AG04449 (cell line): ENCODE measurements at regions of chr2 and their contacts with region 1.

Region 1: GRCh38 chr2:222690564-222691200 is 19.2 kb downstream of the MOGAT1 start:
- DNase-seq: no peak
- H3K4me3 ChIP-seq: no peak overlapping the region
- CTCF ChIP-seq: peak; percentile 99

Region 2: DNA sequence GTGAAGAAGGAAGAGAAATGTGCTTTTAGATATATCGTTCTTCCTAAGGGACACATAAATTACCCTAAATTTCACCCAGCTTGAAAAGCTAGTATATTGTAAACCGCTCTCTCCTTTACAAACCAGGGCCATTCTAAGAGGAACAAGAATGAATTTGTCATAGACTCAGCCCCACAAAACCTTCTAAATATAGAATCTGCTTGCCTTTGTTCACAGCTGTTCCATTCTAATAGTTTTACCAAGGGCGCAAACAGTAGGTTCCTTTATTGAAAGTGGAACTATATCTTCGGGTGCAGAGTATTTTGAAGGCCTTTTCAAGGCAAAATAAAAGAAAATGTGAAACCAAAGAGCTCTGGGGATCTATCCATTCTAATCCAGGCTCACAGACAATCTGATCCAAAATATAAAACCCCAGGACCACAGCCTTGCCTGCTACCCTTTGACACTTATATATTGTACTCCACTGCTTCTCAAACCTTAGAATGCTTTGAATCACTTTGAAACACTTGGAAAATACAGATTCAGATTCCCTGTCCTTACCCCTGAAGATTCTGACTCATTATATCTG is 708.7 kb before region 1 on chr2:
- CTCF ChIA-PET with region 1: no interaction called
- POLR2A ChIA-PET with region 1: no interaction called
- DNase-seq: no peak
- H3K4me3 ChIP-seq: no peak overlapping the region
- CTCF ChIP-seq: no peak

Region 3: DNA sequence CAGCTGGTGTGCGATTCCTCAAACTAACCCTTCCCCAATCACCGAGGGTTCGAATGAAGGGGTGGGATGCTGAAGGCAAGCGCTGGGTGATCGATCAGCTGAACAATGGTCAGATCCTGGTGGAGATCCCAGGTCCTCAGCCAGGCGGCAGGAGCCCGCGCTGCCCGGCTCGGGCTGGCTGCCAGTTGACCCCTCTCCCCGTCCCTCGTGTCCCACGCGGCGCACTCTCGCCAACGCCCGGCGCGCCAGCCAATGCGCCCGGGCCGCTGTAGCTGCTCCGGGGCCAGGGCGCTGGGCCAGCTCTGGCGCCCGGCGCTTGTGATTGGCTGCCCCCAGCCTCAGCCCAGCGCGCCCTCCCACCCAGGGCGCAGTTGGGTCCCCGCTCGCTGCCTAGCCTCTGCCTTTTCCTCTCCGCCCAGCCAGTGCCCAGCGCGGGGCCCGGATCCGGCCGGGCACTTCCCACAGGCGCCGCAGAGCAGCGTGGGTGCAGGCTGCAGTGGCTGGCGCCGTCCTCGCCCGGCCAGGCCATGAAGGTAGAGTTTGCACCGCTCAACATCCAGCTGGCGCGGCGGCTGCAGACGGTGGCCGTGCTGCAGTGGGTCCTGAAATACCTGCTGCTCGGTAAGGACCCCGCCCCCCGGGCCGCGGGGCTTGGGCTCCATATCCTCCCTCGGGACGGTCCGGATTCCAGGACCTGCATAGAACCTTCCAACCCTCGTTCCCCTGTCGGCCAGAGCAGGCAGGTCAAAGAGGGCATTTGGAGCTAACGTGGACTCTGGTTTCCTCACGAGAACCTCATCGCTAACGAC is 19.2 kb before region 1 on chr2 and contains the start of gene MOGAT1:
- CTCF ChIA-PET with region 1: interaction called, 76 read pairs
- POLR2A ChIA-PET with region 1: no interaction called
- DNase-seq: no peak
- H3K4me3 ChIP-seq: peak within 1 kb of the TSS; percentile 48
- CTCF ChIP-seq: no peak

Region 4: DNA sequence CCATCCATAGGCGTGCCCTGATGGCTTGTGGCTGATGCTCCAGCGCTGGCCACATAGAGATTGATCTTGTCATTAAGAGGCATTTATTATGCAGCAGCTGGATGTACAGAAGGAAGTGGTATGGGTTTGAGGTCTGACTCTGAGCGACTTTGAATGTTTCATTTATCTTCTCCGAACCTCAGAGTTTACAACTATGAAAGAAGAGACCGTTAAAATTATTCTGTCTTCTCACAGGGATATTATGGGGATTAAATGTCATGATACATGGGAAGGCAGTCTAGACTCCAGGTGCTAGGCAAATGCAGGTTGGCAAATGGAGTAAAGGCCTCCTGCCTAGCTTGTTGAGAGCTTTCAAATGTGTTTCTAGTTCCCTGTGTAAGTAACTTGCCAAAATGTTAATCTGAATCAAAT is 11.0 kb after region 1 on chr2:
- CTCF ChIA-PET with region 1: interaction called, 156 read pairs
- POLR2A ChIA-PET with region 1: no interaction called
- DNase-seq: no peak
- H3K4me3 ChIP-seq: no peak overlapping the region
- CTCF ChIP-seq: no peak

Region 5: DNA sequence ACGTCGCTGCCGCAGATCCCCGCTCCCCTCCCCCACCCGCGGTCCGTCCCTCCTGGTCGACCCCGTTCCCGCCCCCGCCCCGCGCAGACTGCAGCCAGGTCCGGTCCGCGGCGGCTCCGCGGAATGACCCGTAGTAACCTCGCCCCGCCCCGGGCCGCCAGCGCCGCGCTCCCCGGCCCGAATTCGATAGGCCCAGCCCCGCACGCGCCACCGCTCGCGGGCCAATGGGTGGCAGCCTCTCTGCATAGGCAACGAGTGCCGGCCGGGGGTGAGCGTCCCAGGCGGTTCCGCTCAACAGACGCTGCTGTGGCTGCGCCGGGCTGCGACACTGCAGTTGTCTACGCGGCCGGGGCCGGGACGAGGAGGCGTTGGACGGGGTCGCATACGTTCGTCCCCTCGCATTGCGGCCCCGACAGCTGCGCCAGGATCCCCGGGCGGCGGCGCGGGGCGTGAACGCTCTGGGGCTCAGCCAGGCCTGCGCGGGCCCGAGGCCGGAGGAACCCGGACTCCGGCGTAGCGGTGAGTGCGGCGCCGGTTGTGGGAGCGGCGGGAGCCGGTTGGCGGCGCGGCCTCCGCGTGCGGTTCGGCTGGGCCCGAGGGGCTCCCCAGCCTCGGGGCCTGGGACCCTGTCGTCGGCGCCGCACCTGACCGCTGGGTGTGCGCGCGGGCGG is 170.2 kb after region 1 on chr2 and contains the start of gene ACSL3:
- CTCF ChIA-PET with region 1: interaction called, 11 read pairs
- POLR2A ChIA-PET with region 1: interaction called, 4 read pairs
- DNase-seq: no peak
- H3K4me3 ChIP-seq: peak within 1 kb of the TSS; percentile 77
- CTCF ChIP-seq: no peak

Region 6: GRCh38 chr2:222912117-222912516 is 221.4 kb after region 1 on chr2:
- CTCF ChIA-PET with region 1: interaction called, 46 read pairs
- POLR2A ChIA-PET with region 1: no interaction called
- DNase-seq: no peak
- H3K4me3 ChIP-seq: no peak overlapping the region
- CTCF ChIP-seq: no peak